ENCODE measurements at regions of chr14 and their contacts with region 1.

Region 1: DNA sequence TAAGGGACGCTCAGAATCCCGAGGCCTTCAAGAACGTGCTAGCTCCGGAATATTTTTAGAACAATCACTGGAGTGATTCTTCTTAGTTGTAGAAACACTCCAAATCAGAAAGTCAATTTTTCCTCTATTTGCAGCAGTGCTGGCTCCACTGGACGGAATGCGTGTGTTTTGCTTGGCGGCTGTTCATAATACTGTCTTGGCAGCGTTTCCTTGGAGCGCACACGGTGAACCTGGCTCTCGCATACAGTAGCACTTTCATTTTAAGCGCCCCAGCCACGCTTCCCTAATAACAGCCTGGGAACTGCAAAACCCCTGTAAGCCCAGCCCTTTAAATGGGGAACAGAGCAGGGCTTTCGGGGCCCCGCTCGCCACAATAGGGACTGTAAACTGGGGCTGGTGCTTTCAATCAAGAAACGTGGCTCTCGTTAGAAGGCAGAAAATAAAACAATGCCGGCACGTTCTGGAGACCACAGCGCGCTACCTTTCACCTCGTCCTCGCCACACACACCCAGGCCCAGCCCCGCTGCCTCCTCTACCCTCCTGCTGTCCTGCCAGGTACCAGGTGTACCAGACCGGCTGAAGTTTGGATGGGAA is 79.9 kb downstream of the BCL11B start:
- DNase-seq: peak; percentile 53
- ATAC-seq: no peak
- H3K4me3 Mint-ChIP-seq: peak overlapping the region; percentile 81
- H3K27ac Mint-ChIP-seq: peak overlapping the region; percentile 98
- H3K4me1 Mint-ChIP-seq: peaks cover 84% of the 10 kb centered on the region
- H3K27me3 Mint-ChIP-seq: no peaks in the 10 kb centered on the region
- CTCF ChIP-seq: no peak

Region 2: GRCh38 chr14:97978341-97978740 is 1213.8 kb before region 1 on chr14:
- CTCF ChIA-PET with region 1: no interaction called
- POLR2A ChIA-PET with region 1: no interaction called
- intact Hi-C with region 1: loop called (anchors 10 kb)
- DNase-seq: peak; percentile 90
- ATAC-seq: peak; percentile 84
- H3K4me3 Mint-ChIP-seq: peak overlapping the region; percentile 89
- H3K27ac Mint-ChIP-seq: peak overlapping the region; percentile 95
- H3K4me1 Mint-ChIP-seq: peaks cover 48% of the 10 kb centered on the region
- H3K27me3 Mint-ChIP-seq: no peaks in the 10 kb centered on the region
- CTCF ChIP-seq: peak; percentile 60

Region 3: GRCh38 chr14:98931911-98932310 is 260.2 kb before region 1 on chr14:
- CTCF ChIA-PET with region 1: no interaction called
- POLR2A ChIA-PET with region 1: no interaction called
- intact Hi-C with region 1: loop called (anchors 10 kb)
- DNase-seq: peak; percentile 80
- ATAC-seq: peak; percentile 88
- H3K4me3 Mint-ChIP-seq: peak overlapping the region; percentile 52
- H3K27ac Mint-ChIP-seq: peak overlapping the region; percentile 89
- H3K4me1 Mint-ChIP-seq: peaks cover 76% of the 10 kb centered on the region
- H3K27me3 Mint-ChIP-seq: no peaks in the 10 kb centered on the region
- CTCF ChIP-seq: no peak

Region 4: DNA sequence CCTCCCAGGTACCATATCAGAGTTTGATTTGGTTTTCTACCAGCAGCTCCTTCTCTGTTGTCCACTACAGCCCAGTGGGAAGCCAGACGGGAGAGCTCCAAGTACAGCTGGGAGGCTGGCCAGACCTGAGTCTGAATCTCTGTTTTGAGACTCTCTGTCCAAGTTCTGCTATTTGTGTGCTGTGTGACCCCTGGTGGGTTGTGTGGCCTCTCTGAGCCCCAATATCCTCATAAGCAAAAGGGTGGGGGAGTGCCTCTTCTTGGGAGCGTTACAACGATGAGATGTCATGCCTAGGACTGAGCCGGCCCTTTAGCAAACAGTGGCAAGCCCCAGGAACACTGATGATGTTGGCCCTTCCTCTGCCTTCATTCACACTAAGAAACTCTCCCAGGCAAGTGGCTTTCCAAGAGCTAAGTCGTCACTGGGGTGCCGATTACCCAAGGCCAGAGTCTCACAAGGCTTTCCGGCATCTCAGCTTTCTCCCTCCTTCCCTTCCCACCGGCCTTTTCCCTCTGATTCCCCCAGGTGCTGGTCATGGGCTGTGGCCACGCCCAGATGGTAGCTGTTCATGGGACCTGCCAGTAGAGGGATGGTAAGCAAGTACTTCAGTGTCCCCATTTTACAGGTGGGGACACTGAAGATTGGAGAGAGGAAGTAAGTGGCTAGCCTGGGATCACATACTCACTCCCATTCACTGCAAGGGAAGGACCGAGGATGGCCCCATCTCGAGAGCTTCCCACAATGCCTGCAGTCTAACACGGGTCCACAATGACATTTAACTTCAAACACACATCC is 32.2 kb after region 1 on chr14:
- CTCF ChIA-PET with region 1: interaction called, 19 read pairs
- POLR2A ChIA-PET with region 1: interaction called, 17 read pairs
- intact Hi-C with region 1: no loop called
- DNase-seq: no peak
- ATAC-seq: peak; percentile 28
- H3K4me3 Mint-ChIP-seq: peak overlapping the region; percentile 52
- H3K27ac Mint-ChIP-seq: peak overlapping the region; percentile 99
- H3K4me1 Mint-ChIP-seq: peaks cover 94% of the 10 kb centered on the region
- H3K27me3 Mint-ChIP-seq: no peaks in the 10 kb centered on the region
- CTCF ChIP-seq: peak; percentile 42

Region 5: GRCh38 chr14:99235582-99236320 is 43.6 kb after region 1 on chr14:
- CTCF ChIA-PET with region 1: interaction called, 19 read pairs
- POLR2A ChIA-PET with region 1: interaction called, 7 read pairs
- intact Hi-C with region 1: loop called (anchors 5 kb)
- DNase-seq: no peak
- ATAC-seq: no peak
- H3K4me3 Mint-ChIP-seq: peak overlapping the region; percentile 79
- H3K27ac Mint-ChIP-seq: peak overlapping the region; percentile 99
- H3K4me1 Mint-ChIP-seq: peaks cover 91% of the 10 kb centered on the region
- H3K27me3 Mint-ChIP-seq: no peaks in the 10 kb centered on the region
- CTCF ChIP-seq: no peak

Region 6: DNA sequence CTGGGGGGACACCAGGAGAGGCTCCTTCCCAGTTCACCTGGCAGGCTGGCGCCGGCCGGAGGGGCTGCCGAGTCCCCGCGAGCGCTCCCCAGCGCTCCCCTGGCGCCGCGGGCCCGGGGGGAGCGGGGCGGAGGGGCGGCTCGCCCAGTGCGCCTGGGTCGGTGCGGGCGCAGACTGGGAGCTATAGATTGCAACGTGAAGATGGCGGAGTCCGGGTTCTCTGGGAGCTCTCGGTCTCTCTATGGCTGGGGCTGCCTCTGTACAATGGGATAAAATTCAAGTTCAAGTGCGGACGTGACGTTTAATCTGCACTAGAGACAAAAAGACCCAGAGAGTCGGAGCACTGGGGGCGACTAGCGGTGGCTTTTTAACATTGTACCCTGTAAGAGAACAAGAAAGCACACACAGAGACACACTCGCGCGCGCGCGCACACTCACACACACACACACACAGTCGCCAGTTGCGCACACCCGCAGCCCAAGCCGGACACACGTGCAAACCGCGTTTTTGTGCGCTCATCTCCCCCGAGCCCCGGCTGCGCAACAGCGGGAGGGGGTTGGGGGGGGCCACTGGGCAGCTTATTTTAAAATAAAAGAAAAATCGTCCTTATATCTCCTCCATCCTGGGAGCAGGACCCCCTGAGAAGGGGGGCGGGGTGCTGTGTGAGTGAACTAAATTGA is 80.0 kb after region 1 on chr14 and contains the start of gene BCL11B:
- CTCF ChIA-PET with region 1: interaction called, 27 read pairs
- POLR2A ChIA-PET with region 1: interaction called, 19 read pairs
- intact Hi-C with region 1: loop called (anchors 5 kb)
- DNase-seq: peak; percentile 98
- ATAC-seq: peak; percentile 72
- H3K4me3 Mint-ChIP-seq: peak within 1 kb of the TSS; percentile 86
- H3K27ac Mint-ChIP-seq: peak within 1 kb of the TSS; percentile 96
- H3K4me1 Mint-ChIP-seq: peaks cover 23% of the 10 kb centered on the region
- H3K27me3 Mint-ChIP-seq: peaks cover 2% of the 10 kb centered on the region
- CTCF ChIP-seq: peak; percentile 67
- total RNA-seq, gene BCL11B: 48.5 to 53.0 TPM

Region 7: DNA sequence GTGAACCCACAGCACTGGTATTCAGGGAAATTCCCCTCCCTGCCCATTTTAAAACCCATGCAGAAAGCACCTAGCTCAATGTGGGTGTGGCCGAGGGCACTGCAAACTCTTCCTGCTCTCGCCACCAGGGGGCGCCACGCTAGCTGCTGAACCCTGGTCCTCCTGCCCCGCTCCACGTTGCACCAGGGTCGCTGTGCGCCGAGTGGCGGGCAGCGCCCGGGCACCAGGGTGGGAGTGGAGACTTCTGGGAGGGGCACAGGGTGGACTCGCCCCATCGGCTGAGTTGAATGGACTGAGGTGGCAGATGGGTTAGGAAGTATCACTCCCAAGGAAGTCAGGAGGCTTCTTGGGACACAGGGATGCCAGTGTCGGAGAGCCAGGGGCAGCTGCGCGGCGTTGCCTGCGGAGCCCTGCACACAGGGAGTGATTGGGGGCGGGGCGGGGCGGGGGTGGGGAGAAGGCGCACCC is 128.0 kb after region 1 on chr14:
- CTCF ChIA-PET with region 1: no interaction called
- POLR2A ChIA-PET with region 1: no interaction called
- intact Hi-C with region 1: no loop called
- DNase-seq: peak; percentile 89
- ATAC-seq: peak; percentile 90
- H3K4me3 Mint-ChIP-seq: peak overlapping the region; percentile 35
- H3K27ac Mint-ChIP-seq: no peak overlapping the region
- H3K4me1 Mint-ChIP-seq: peaks cover 9% of the 10 kb centered on the region
- H3K27me3 Mint-ChIP-seq: no peaks in the 10 kb centered on the region
- CTCF ChIP-seq: peak; percentile 91